B cell (primary cell): ENCODE measurements at regions of chr16 and their contacts with region 1.

Region 1: DNA sequence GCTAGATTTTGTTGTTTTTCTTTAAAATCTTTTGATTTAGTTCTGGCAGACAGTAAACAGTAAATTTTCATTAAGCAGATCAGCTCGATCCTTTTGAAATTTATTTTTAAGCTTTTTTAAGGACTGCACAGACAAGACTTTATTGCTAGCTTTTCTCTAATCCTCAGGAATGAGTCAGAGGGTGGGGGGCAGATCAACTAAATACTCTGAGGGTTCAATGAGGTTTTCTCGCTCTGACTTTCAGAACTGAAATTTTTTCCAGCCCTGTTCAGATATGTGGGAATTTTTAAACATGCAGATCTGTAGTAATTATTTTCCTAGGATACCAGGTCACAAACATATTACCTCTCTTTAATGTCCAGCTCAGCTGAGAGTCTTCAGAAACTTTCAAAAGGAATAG is 977.2 kb downstream of the CDH11 start:
- DNase-seq: no peak
- ATAC-seq: no peak
- H3K4me3 ChIP-seq: no peak overlapping the region
- H3K4me3 Mint-ChIP-seq: no peak overlapping the region
- H3K27ac ChIP-seq: no peak overlapping the region
- H3K27ac Mint-ChIP-seq: no peak overlapping the region
- H3K4me1 ChIP-seq: no peaks in the 10 kb centered on the region
- H3K4me1 Mint-ChIP-seq: no peaks in the 10 kb centered on the region
- H3K27me3 ChIP-seq: no peaks in the 10 kb centered on the region
- H3K27me3 Mint-ChIP-seq: no peaks in the 10 kb centered on the region
- CTCF ChIP-seq: no peak

Region 2: GRCh38 chr16:64092271-64092670 is 52.3 kb before region 1 on chr16:
- CTCF ChIA-PET with region 1: no interaction called
- POLR2A ChIA-PET with region 1: no interaction called
- intact Hi-C with region 1: no loop called
- DNase-seq: no peak
- ATAC-seq: no peak
- H3K4me3 ChIP-seq: no peak overlapping the region
- H3K4me3 Mint-ChIP-seq: no peak overlapping the region
- H3K27ac ChIP-seq: no peak overlapping the region
- H3K27ac Mint-ChIP-seq: no peak overlapping the region
- H3K4me1 ChIP-seq: no peaks in the 10 kb centered on the region
- H3K4me1 Mint-ChIP-seq: no peaks in the 10 kb centered on the region
- H3K27me3 ChIP-seq: no peaks in the 10 kb centered on the region
- H3K27me3 Mint-ChIP-seq: no peaks in the 10 kb centered on the region
- CTCF ChIP-seq: no peak

Region 3: DNA sequence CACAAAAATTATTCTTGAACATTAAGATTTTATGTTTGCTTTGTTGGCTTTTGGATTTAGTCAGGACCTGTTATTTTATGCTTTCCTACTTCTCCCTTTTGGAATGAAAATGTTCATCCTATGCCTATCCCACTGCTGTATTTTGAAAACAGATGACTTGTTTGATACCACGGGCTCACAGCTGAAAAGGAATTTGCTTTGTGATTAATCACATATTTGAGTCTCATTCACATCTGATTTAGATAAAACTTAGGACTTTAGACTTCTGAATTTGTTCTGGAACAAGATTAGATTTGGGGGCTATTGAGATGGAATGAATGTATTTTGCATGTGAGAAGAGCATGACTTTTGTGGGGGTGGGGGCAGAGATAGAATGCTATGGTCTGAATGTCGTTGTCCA is 35.4 kb before region 1 on chr16:
- CTCF ChIA-PET with region 1: no interaction called
- POLR2A ChIA-PET with region 1: no interaction called
- intact Hi-C with region 1: no loop called
- DNase-seq: no peak
- ATAC-seq: no peak
- H3K4me3 ChIP-seq: no peak overlapping the region
- H3K4me3 Mint-ChIP-seq: no peak overlapping the region
- H3K27ac ChIP-seq: no peak overlapping the region
- H3K27ac Mint-ChIP-seq: no peak overlapping the region
- H3K4me1 ChIP-seq: no peaks in the 10 kb centered on the region
- H3K4me1 Mint-ChIP-seq: no peaks in the 10 kb centered on the region
- H3K27me3 ChIP-seq: no peaks in the 10 kb centered on the region
- H3K27me3 Mint-ChIP-seq: no peaks in the 10 kb centered on the region
- CTCF ChIP-seq: no peak

Region 4: DNA sequence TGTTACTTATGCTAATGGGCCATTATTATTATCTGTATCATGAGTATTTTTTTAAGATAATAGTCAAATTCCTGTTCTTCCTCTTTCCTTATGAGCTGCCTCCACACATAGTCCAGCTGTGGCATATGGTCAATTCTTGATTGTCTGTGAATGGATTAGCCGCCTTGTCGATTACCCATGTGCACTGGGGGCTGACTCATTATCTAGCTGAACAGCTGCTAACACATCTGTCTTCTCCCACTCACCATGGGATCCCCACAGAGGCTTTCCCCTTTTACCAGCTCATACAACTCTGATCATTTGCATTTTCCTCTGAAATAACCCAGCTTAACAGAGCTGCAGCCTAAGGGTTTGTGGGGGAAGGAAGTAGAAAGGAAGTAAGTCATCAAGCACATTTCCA is 62.2 kb after region 1 on chr16:
- CTCF ChIA-PET with region 1: no interaction called
- POLR2A ChIA-PET with region 1: no interaction called
- intact Hi-C with region 1: loop called (anchors 10 kb)
- DNase-seq: no peak
- ATAC-seq: no peak
- H3K4me3 ChIP-seq: no peak overlapping the region
- H3K4me3 Mint-ChIP-seq: no peak overlapping the region
- H3K27ac ChIP-seq: no peak overlapping the region
- H3K27ac Mint-ChIP-seq: no peak overlapping the region
- H3K4me1 ChIP-seq: no peaks in the 10 kb centered on the region
- H3K4me1 Mint-ChIP-seq: no peaks in the 10 kb centered on the region
- H3K27me3 ChIP-seq: no peaks in the 10 kb centered on the region
- H3K27me3 Mint-ChIP-seq: no peaks in the 10 kb centered on the region
- CTCF ChIP-seq: no peak